Activated CD4-positive, alpha-beta memory T cell treated with anti-CD3 and anti-CD28 coated beads for 36 hours (primary cell): ENCODE measurements at regions of chr7 and their contacts with region 1.

Region 1: GRCh38 chr7:90403174-90404113 is at the start of gene CLDN12:
- DNase-seq: peak; percentile 89
- H3K4me3 Mint-ChIP-seq: peak within 1 kb of the TSS; percentile 84
- H3K27ac Mint-ChIP-seq: peak within 1 kb of the TSS; percentile 80
- H3K4me1 Mint-ChIP-seq: peaks cover 11% of the 10 kb centered on the region
- H3K27me3 Mint-ChIP-seq: no peaks in the 10 kb centered on the region
- total RNA-seq, gene CLDN12: 6.9 to 8.3 TPM

Region 2: GRCh38 chr7:90211391-90212148 is 191.9 kb before region 1 on chr7 and contains the start of gene STEAP2:
- CTCF ChIA-PET with region 1: no interaction called
- POLR2A ChIA-PET with region 1: no interaction called
- intact Hi-C with region 1: no loop called
- DNase-seq: peak; percentile 41
- H3K4me3 Mint-ChIP-seq: peak within 1 kb of the TSS; percentile 26
- H3K27ac Mint-ChIP-seq: no peak within 1 kb of the TSS
- H3K4me1 Mint-ChIP-seq: peaks cover 6% of the 10 kb centered on the region
- H3K27me3 Mint-ChIP-seq: peaks cover 21% of the 10 kb centered on the region
- total RNA-seq, gene STEAP2: not detected

Region 3: GRCh38 chr7:90346336-90347125 is 56.9 kb before region 1 on chr7 and contains the start of gene GTPBP10:
- CTCF ChIA-PET with region 1: interaction called, 3 read pairs
- POLR2A ChIA-PET with region 1: interaction called, 4 read pairs
- intact Hi-C with region 1: loop called (anchors 1 kb)
- DNase-seq: peak; percentile 97
- H3K4me3 Mint-ChIP-seq: peak within 1 kb of the TSS; percentile 94
- H3K27ac Mint-ChIP-seq: peak within 1 kb of the TSS; percentile 93
- H3K4me1 Mint-ChIP-seq: peaks cover 40% of the 10 kb centered on the region
- H3K27me3 Mint-ChIP-seq: no peaks in the 10 kb centered on the region
- total RNA-seq, gene GTPBP10: 32.9 to 33.2 TPM

Region 4: DNA sequence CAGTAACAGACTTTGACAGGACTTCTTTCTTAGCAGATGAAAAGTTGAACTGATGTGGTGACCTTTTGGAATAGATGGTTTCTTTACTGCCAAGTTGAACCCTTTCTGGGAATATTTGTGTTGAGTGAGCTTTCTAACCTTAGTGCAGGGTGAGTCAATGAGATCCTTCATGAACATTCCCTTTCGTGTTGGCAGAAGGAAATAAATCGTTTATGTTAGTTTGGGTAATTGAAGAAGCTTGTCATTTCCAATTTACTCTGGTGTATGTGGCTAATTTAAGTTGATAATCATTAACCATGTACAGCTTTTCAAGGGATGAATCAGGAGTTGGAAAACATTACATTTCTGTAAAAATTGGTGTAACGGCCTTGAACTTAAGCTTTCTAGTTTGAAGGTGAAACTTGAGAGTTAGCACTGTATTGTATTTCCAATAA is 109.4 kb after region 1 on chr7:
- CTCF ChIA-PET with region 1: no interaction called
- POLR2A ChIA-PET with region 1: no interaction called
- intact Hi-C with region 1: no loop called
- DNase-seq: no peak
- H3K4me3 Mint-ChIP-seq: no peak overlapping the region
- H3K27ac Mint-ChIP-seq: no peak overlapping the region
- H3K4me1 Mint-ChIP-seq: no peaks in the 10 kb centered on the region
- H3K27me3 Mint-ChIP-seq: no peaks in the 10 kb centered on the region